GM10248 (cell line): ENCODE measurements at regions of chr17 and their contacts with region 1.

Region 1: DNA sequence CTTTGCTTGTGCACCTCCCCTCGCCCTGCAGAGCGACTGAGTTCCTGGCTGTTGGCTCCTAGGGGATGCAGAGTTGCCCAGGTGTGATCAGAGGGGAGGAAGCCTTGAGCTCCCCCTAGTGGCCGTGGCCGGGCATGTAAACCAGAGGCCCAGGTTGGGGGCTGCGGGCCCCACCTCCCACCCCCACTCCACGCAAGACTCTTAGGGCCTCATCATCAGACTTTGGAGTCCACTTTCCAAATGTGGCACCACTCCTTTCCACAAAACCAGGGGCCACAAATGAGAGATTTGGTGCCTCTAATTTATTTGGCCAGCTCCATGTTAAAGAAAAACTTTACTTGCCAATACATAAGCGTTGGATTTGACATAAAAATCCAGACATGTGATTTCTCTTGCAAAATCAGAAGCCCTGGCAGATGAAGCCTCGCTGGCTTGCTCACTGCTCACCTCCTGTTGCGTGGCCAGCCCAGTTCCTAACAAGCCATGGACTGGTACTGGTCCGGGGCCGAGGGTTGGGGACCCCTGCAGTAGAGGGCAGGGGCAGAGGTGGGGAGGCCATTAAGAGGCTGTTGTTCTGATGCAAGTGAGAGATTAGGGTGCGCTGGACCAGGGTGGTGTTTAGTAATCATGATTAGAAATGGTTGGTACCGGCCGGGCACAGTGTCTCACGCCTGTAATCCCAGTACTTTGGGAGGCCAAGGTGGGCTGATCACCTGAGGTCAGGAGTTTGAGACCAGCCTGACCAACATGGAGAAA is 28.7 kb upstream of the GAS7 start:
- DNase-seq: peak; percentile 82
- CTCF ChIP-seq: peak; percentile 71

Region 2: GRCh38 chr17:9924735-9925191 is 302.3 kb before region 1 on chr17:
- CTCF ChIA-PET with region 1: interaction called, 23 read pairs
- POLR2A ChIA-PET with region 1: no interaction called
- DNase-seq: peak; percentile 76
- CTCF ChIP-seq: peak; percentile 66

Region 3: GRCh38 chr17:9968902-9969617 is 258.0 kb before region 1 on chr17:
- CTCF ChIA-PET with region 1: interaction called, 35 read pairs
- POLR2A ChIA-PET with region 1: no interaction called
- DNase-seq: no peak
- CTCF ChIP-seq: no peak

Region 4: GRCh38 chr17:10115071-10115539 is 112.0 kb before region 1 on chr17:
- CTCF ChIA-PET with region 1: interaction called, 15 read pairs
- POLR2A ChIA-PET with region 1: no interaction called
- DNase-seq: peak; percentile 68
- CTCF ChIP-seq: no peak

Region 5: GRCh38 chr17:10198509-10199253 is 28.4 kb before region 1 on chr17 and contains the start of gene GAS7:
- CTCF ChIA-PET with region 1: interaction called, 11 read pairs
- POLR2A ChIA-PET with region 1: no interaction called
- DNase-seq: peak; percentile 82
- CTCF ChIP-seq: no peak

Region 6: DNA sequence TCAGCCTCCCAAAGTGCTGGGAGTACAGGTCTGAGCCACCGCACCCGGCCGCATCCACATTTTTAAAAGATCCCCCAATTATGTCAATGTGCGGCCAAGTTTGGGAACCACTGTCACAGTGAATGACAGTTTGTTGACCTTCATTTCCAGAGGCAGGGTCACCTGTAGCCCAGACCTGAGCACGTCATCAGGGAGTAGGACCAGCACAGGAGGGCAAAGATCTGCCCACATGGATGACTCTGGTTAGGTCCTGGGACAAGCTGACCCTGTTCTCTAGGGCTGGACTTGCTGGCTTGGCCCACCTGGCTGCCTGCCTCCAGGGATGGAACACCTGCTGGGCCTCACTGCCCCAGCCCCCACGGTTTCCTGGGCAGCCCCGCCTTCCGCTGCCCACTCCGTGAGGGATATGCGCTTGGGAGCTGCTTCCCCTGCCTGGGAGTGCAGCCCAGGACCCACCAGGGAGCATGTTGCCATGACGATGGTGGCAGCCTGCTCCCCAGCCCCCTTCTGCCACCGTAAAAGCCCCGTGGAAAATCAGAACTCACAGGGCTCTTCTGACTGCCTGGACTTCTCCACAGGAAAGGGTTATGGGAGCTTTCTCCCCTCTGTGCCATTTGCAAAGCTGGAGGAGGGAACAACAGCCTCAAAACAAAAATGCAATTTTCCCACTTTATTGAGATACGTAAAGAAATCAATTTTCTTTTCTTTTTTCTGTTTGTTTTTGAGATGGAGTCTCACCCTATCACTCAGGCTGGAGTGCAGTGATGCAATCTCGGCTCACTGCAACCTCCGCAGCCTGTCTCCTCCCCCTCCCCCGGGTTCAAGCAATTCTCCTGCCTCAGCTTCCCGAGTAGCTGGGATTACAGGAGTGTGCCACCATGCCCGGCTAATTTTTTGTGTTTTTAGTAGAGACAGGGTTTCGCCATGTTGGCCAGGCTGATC is 10.8 kb before region 1 on chr17:
- CTCF ChIA-PET with region 1: interaction called, 14 read pairs
- POLR2A ChIA-PET with region 1: no interaction called
- DNase-seq: no peak
- CTCF ChIP-seq: no peak

Region 7: DNA sequence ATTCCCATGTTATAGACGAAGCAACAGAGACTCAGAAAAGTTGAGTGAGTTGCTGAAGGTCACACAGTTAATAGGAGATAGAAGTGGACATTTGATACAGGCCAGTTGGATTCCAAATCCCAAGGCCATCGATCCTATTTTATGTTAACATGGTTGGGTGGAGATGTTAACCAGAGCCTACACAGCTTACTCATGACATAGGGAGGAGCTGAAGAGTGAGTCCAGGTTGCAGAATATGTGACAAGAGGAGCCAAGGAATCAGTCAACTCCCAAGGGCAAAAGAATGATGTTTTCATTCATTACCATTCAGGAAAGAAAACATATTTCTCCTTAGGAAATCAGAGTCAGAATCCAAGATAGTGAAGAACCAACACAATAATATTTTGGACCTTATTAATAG is 11.6 kb after region 1 on chr17:
- CTCF ChIA-PET with region 1: interaction called, 21 read pairs
- POLR2A ChIA-PET with region 1: no interaction called
- DNase-seq: no peak
- CTCF ChIP-seq: no peak

Region 8: GRCh38 chr17:10598621-10599020 is 371.5 kb after region 1 on chr17:
- CTCF ChIA-PET with region 1: no interaction called
- POLR2A ChIA-PET with region 1: no interaction called
- DNase-seq: no peak
- CTCF ChIP-seq: no peak